Psoas muscle (tissue), 8 donors: ENCODE measurements at regions of chr14 and their contacts with region 1.

Region 1: DNA sequence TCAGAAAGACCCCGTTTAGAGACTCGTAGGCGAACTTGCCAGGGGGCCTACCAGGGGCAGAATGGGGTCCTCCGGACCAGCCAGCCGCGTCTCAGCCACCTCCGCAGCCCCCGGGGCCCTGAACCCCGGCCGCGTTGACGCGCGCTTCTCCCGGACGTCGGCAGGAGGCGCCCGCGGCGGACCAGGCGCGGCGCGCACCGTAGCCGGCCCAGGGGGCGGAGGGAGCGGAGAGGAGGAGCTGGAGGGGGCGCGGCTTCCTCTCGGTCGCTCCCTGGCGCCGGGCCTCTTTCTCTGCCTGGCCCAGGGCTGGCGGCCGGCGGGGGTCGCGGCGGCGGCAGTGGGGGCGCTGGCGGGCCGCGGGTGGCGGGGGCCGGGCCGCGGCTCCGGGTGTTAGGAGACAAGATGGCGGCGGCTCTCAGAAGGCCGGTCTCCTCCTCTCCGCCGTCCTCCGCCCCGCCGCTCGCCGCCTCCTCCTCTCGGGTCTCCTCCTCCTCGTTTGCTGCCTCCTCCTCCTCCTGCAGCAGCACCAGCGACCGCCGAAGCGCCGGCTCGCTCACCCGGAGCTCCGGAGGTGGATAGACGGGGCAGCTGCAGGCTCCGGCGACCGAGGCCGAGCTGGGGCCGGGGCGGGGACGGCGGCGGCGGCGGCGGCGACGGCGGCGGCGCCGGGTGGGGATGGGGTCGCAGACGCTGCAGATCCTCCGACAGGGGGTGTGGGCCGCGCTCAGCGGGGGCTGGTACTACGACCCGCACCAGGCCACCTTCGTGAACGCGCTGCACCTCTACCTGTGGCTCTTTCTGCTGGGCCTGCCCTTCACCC is at the start of gene PCNX1:
- DNase-seq: peak; percentile 92 to 95
- ATAC-seq: peak; percentile 88 to 92 (median 92)
- H3K4me3 ChIP-seq: peak within 1 kb of the TSS; percentile 95
- H3K27ac ChIP-seq: peak within 1 kb of the TSS; percentile 95
- H3K4me1 ChIP-seq: peaks cover 30% of the 10 kb centered on the region
- H3K27me3 ChIP-seq: no peaks in the 10 kb centered on the region
- CTCF ChIP-seq: peak; percentile 93
- total RNA-seq, gene PCNX1: 29.1 to 48.1 (median 41.4) TPM

Region 2: GRCh38 chr14:70821584-70822529 is 85.5 kb before region 1 on chr14:
- intact Hi-C with region 1: loop called in 1 of 2 experiments (anchors 10 kb)
- DNase-seq: peak; percentile 52 to 74
- ATAC-seq: peak; percentile 32 to 76 (median 60)
- H3K4me3 ChIP-seq: peak overlapping the region; percentile 69
- H3K27ac ChIP-seq: no peak overlapping the region
- H3K4me1 ChIP-seq: no peaks in the 10 kb centered on the region
- H3K27me3 ChIP-seq: peaks cover 0 to 30% (median 10%) of the 10 kb centered on the region in 3 donors
- CTCF ChIP-seq: no peak

Region 3: DNA sequence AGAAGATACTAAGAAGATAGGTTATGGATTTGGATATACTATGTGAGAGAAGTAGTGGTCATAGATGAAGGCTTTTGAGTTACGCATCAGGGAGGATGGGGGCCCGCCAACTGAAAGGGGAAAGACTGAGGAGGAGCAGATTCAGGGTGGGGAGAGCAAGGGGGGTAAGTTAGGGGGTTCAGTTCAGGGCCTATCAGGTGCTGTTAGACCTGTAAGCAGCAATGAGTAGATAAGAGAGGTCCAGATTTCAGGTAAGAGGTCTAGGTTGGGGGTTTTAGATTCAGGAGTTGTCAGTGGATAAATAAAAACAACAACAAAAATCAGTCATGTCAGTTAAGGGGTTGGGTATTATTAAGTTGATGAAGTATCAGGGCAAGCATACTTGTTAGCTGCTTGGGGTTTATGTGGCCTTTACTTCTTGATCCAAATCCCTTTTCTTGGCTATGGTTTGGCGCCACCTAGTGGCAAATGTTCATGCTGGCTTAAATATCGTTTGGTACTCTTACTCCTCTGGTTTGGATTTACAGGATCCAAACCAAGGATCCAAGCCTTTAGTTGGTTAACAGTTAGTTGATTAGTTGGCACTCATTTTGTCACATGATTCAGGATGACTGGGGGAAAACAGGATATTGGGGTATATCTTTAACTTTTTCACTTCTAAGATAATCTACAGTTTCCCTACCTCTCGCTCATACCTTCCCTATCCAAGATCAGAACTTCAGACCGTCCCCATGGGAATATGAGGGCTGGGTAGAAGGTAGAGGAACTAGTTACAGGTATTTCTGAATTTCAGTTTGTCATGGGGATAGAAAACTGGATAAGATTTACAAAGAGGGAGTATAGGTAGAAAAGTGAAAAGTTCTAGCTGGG is 65.0 kb after region 1 on chr14:
- intact Hi-C with region 1: loop called (anchors 1 to 5 kb)
- DNase-seq: peak; percentile 73 to 81
- ATAC-seq: peak; percentile 84 to 97 (median 86)
- H3K4me3 ChIP-seq: no peak overlapping the region
- H3K27ac ChIP-seq: no peak overlapping the region
- H3K4me1 ChIP-seq: peaks cover 5% of the 10 kb centered on the region
- H3K27me3 ChIP-seq: no peaks in the 10 kb centered on the region
- CTCF ChIP-seq: peak; percentile 95